OCI-LY7 (cell line): ENCODE measurements at regions of chr5 and their contacts with region 1.

Region 1: GRCh38 chr5:175534070-175534932 is 55.9 kb downstream of the SFXN1 start:
- DNase-seq: no peak
- H3K4me3 ChIP-seq: no peak overlapping the region
- H3K27ac ChIP-seq: no peak overlapping the region
- H3K4me1 ChIP-seq: no peaks in the 10 kb centered on the region
- CTCF ChIP-seq: peak; percentile 33; the same call in 1 of the 2 replicates

Region 2: DNA sequence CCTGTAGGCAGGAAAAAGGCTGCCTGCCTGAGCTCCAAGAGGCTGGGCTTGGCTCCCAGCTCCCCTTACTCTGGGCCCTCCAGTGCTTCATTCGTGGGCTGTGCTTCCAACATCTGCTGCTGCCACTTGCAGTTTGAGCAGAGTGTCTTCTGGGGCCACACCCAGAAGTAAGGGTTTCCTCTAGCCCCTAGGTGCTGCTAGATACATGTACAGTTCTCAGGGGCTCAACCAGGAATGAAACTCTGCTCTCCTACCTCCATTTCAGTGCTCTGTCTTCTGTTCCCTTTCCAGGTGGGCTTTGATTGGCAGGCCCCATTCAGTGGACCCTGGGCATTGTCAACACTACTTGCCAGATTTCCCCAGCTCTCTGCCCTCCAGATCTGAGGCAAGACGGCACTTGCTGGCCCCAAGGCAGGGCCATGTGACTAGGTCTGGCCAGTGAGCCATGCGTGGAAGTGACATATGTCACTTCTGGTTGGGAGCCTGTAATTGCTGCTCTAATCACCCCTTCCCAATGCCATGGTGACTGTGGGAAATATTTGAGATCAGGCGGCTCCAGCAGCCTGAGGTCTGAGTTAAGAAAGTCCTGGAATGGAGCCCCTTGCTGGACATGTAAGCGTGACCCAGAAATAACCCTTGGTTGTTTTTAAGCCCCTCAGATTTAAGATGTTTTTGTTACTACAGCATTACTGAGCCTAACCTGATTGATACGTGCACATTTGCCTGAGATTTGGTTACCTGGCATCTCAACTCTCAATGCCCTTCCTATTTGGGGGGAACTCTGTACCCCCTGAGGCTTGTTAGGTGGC is 1908.4 kb before region 1 on chr5:
- CTCF ChIA-PET with region 1: no interaction called
- POLR2A ChIA-PET with region 1: no interaction called
- intact Hi-C with region 1: no loop called
- DNase-seq: peak; percentile 83
- H3K4me3 ChIP-seq: no peak overlapping the region
- H3K27ac ChIP-seq: no peak overlapping the region
- H3K4me1 ChIP-seq: peaks cover 50% of the 10 kb centered on the region
- CTCF ChIP-seq: peak; percentile 78

Region 3: GRCh38 chr5:175621971-175622370 is 87.7 kb after region 1 on chr5:
- CTCF ChIA-PET with region 1: no interaction called
- POLR2A ChIA-PET with region 1: interaction called, 12 read pairs
- intact Hi-C with region 1: no loop called
- DNase-seq: no peak
- H3K4me3 ChIP-seq: no peak overlapping the region
- H3K27ac ChIP-seq: no peak overlapping the region
- H3K4me1 ChIP-seq: no peaks in the 10 kb centered on the region
- CTCF ChIP-seq: no peak